Psoas muscle (tissue), 8 donors: ENCODE measurements at regions of chr17 and their contacts with region 1.

Region 1: GRCh38 chr17:59154721-59155438 is at the start of gene SKA2:
- DNase-seq: peak; percentile 94 to 97
- ATAC-seq: peak; percentile 96 to 97 (median 97)
- H3K4me3 ChIP-seq: peak within 1 kb of the TSS; percentile 74
- H3K27ac ChIP-seq: peak within 1 kb of the TSS; percentile 66
- H3K4me1 ChIP-seq: peaks cover 20% of the 10 kb centered on the region
- H3K27me3 ChIP-seq: no peaks in the 10 kb centered on the region
- CTCF ChIP-seq: no peak
- total RNA-seq, gene SKA2: 7.2 to 17.1 (median 11.2) TPM

Region 2: DNA sequence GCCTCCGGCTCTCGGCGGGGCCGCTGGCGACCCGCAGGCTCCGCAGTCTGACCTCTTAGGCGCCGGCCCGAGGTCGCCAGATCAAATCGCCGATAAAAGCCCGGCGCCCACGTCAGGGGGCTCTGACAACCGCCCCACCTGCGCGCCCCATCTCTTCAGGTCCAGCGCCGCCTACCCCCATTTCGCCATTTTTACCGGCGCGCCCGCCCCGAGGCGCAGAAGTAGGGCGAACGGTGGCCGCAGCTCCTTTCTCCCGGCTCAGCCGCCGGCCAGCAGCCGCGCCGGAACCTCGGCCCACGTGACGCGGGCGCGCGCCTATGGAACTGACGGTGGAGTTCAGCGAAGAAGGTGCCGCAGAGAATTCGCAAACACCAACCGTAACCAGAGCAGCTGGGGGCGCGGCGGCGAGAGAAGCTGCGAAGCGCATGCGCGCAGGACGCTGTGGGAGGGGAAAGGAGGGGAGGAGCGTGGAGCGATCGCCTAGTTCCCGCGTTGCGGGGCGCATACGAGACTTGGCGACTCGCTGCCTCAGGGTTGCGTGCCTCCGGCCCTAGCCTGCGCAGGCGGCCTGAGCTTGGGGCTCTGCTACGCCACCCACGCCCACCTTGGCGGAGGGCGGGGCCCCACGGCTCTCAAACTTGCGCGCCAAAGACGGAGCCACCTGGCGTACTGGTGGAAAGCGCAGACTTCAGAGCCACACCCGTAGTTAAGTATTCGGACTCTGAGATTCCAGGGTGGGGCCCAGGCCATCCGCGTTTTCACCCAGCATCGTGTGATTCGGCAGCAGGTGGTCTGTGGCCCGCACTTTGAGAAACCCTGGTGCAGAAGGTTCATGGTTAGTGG is 48.2 kb before region 1 on chr17 and contains the start of gene TRIM37:
- intact Hi-C with region 1: loop called in 1 of 2 experiments (anchors 5 kb)
- DNase-seq: peak; percentile 97 to 99
- ATAC-seq: peak; percentile 96 to 99 (median 97)
- H3K4me3 ChIP-seq: peak within 1 kb of the TSS; percentile 90
- H3K27ac ChIP-seq: peak within 1 kb of the TSS; percentile 88
- H3K4me1 ChIP-seq: peaks cover 12% of the 10 kb centered on the region
- H3K27me3 ChIP-seq: no peaks in the 10 kb centered on the region
- CTCF ChIP-seq: no peak
- total RNA-seq, gene TRIM37: 12.1 to 16.2 (median 14.7) TPM

Region 3: DNA sequence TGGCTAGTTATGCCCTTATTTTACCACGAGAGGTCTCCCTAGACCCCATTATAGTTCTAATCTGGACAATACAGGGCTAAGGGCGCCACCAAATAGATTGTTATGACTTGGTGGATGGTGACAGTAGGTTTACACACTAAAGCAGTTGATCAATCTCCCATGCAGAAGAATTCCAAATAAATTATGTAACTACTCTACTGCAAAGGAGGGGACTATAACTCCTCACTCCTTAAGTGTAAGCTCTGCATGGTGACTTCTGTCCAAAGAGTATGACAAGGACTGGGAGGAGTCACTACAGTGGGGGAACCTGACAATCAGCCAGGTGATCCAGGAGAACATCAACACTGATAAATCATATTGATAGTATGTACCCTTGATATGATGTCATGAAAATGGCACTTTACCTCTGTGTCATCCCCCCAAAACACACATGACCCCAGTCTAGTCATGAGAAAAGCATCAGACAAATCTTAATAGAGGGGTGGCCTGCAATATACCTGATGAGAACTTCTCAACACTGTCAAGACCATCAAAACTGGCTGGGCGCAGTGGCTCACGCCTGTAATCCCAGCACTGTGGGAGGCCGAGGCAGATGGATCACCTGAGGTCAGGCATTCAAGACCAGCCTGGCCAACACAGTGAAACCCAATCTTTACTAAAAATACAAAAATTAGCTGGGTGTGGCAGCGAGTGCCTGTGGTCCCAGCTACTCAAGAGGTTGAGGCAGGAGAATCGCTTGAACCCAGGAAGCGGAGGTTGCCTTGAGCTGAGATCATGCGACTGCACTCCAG is 156.4 kb after region 1 on chr17:
- intact Hi-C with region 1: no loop called
- DNase-seq: no peak
- ATAC-seq: peak; percentile 93 to 98 (median 96)
- H3K4me3 ChIP-seq: no peak overlapping the region
- H3K27ac ChIP-seq: no peak overlapping the region
- H3K4me1 ChIP-seq: peaks cover 9% of the 10 kb centered on the region
- H3K27me3 ChIP-seq: no peaks in the 10 kb centered on the region
- CTCF ChIP-seq: peak; percentile 80

Region 4: DNA sequence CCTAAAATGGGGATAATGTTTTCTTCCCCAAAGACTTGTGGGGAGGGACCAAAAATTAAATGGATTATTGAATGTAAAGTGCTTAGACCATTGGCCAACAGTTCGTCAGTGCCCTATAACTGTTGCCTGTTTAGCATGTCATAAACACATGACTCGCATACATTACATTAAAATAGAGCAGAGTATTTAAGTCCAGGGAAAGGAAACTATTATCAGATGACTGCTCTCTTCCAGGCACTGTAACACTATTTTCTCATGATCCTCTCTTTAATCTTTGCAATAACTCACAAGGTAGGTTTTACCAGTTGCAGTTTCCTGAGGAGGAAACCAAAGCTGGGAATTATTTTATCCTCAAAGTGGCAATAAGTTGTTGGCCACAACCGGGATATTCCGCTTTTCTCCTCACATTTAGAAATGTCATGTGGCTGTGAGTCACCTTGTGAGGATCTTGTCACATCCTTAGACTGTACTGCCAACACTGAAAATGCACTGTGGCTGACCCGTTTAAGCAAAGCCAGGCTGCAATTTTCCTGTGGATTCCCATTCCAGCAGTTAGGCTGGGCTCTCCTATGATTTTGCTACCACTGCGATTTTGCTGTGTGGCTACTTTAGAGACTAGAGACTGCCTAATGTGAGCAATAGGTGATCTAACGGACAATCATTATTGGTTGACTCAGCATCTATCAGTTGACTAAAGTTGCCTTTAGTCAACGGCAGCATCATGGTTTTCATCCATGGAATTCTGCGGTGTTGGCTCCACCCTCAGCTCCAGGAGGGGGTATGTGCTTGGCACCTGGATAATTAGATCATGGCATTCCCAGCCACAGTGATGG is 352.2 kb after region 1 on chr17:
- intact Hi-C with region 1: no loop called
- DNase-seq: no peak
- ATAC-seq: peak; percentile 54 to 89 (median 74)
- H3K4me3 ChIP-seq: no peak overlapping the region
- H3K27ac ChIP-seq: peak overlapping the region; percentile 50
- H3K4me1 ChIP-seq: peaks cover 15% of the 10 kb centered on the region
- H3K27me3 ChIP-seq: no peaks in the 10 kb centered on the region
- CTCF ChIP-seq: no peak